OCI-LY7 (cell line): ENCODE measurements at regions of chr1 and their contacts with region 1.

Region 1: GRCh38 chr1:200510228-200510623 is 100.4 kb upstream of the ZNF281 start:
- DNase-seq: peak; percentile 82
- H3K4me3 ChIP-seq: no peak overlapping the region
- H3K27ac ChIP-seq: no peak overlapping the region
- H3K4me1 ChIP-seq: no peaks in the 10 kb centered on the region
- CTCF ChIP-seq: peak; percentile 99

Region 2: DNA sequence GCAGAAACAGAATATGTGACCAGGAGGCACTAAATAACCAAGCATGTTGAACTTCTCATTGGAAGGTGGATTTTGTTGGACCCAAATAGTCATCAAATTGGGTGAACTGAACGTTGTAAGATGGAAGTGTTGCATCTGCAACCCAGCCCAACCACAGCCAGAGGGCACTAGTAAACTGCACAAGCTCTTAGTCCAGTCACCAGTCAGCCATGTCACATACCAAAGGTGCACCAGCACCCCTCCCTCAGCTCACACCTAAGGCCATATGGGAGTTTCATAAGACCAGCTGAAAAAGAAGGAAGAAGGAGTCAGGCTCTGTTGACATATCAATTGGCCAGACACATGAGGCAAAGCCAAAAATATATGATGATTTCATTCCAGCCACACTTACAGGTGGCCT is 964.4 kb before region 1 on chr1:
- CTCF ChIA-PET with region 1: no interaction called
- POLR2A ChIA-PET with region 1: interaction called, 4 read pairs
- intact Hi-C with region 1: loop called (anchors 10 kb)
- DNase-seq: peak; percentile 24
- H3K4me3 ChIP-seq: no peak overlapping the region
- H3K27ac ChIP-seq: no peak overlapping the region
- H3K4me1 ChIP-seq: no peaks in the 10 kb centered on the region
- CTCF ChIP-seq: peak; percentile 68

Region 3: DNA sequence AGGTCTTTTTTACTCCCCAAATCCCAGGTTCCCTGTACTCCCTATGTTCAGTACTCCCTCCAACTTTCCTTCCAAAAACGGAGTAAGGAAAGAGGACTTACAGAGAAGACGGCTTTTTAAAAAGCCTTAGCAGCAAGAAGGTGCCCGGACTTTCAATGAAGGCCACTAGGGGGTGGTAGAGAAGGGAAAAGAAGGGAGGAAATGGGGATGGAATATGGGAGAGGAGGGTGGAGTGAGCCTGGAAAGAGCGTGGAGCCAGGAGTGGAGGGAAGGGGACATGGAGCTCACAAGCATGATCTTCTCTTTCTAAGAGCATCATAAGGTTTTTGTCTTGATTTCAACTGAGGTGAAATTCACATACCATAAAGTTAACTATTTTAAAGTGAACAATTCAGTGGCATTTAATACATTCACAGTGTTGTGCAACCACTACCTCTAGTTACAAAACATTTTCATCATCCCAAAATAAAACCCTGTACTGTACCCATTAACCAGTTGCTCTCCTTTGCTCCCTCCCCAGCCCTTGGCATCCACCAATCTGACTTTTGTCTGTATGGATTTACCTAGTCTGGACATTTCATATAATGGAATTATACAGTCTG is 230.3 kb before region 1 on chr1:
- CTCF ChIA-PET with region 1: no interaction called
- POLR2A ChIA-PET with region 1: no interaction called
- intact Hi-C with region 1: loop called (anchors 2 kb)
- DNase-seq: peak; percentile 46
- H3K4me3 ChIP-seq: no peak overlapping the region
- H3K27ac ChIP-seq: no peak overlapping the region
- H3K4me1 ChIP-seq: peaks cover 9% of the 10 kb centered on the region
- CTCF ChIP-seq: peak; percentile 82